Transverse colon (tissue), 4 donors: ENCODE measurements at regions of chr7 and their contacts with region 1.

Region 1: DNA sequence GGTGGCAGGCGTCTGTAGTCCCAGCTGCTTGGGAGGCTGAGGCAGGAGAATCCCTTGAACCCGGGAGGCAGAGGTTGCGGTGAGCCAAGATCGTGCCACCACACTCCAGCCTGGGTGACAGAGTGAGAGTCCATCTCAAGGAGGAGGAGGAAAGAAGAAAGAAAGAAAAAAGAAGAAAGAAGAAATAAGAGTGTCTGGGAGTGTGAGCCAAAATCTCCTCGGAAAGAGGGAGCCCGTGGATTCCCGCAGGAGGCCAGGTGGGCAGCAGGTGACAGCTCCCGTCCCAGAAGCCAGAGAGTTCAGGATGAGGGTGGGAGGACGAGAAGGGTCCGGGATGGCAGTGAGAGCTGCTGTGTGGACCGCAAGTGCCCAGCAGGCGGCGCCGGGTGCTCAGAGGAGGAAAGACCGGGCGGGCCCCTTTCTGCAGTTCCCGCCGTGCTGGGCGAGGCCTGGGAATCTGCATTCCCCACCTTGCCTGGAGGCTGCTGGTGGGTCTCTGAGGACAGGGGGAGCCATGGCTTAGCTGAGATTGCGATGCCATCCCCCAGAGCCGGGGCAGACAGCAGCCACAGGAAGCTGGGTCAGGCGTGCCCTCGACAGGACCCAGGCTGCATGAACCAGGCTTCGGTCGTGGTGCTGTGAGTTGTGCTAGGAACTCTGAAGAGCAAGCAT is 17.1 kb upstream of the AMZ1 start:
- DNase-seq: peak; percentile 66
- H3K4me3 ChIP-seq: no peak overlapping the region
- H3K27ac ChIP-seq: no peak overlapping the region
- H3K4me1 ChIP-seq: peaks cover 0 to 17% (median 12%) of the 10 kb centered on the region in 4 donors
- H3K27me3 ChIP-seq: peaks cover 9% of the 10 kb centered on the region
- CTCF ChIP-seq: peak; percentile 74 to 81 (median 76)
- EP300 ChIP-seq: no peak
- POLR2A ChIP-seq: no peak

Region 2: DNA sequence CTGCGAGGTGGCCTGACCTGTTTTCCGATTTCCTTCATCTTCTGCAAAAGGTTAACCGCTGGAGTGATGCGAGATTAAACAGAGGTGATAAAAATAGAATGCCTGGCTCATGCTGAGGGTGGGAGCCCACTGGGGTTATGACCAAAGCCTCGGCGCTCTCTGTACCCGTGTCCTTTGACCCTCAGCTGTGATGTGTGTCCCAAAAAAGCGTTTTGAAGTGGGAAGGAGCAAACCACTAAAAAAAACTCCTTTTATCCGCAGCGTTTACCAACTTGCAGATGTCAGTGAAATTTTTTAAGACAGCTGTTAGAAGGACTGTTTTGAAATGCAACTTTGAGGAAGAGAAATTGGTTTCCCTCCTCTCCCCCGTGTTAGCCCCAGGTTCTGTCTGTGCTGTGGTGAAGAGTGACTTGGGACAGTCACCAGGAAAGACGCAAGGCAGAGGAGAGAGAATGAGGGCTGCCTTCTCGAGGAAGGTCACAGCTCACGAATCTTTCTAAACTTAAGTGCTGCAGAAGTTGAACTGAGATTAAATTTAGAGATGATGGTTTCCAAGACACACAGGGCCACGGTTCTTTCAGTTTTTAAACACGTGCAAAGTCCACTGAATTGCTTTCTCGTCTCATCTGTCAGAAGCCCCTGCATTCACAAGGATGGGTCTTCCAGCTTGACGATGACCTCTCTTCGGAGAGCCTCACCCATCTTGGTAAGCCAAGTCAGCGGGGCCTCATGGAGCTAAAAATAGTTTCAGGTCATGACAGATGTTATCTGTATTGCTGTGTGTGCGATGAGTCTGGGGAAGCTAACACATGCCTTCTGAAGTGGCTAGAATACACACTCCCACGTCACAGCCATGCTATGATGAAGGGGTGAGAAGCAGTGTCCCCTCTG is 44.7 kb after region 1 on chr7:
- in situ Hi-C with region 1: no loop called
- intact Hi-C with region 1: loop called (anchors 1 kb)
- DNase-seq: no peak
- H3K4me3 ChIP-seq: no peak overlapping the region
- H3K27ac ChIP-seq: no peak overlapping the region
- H3K4me1 ChIP-seq: peaks cover 3 to 24% (median 19%) of the 10 kb centered on the region in 4 donors
- H3K27me3 ChIP-seq: no peaks in the 10 kb centered on the region
- CTCF ChIP-seq: no peak
- EP300 ChIP-seq: no peak
- POLR2A ChIP-seq: no peak